A549 (cell line): ENCODE measurements at regions of chr19 and their contacts with region 1.

Region 1: GRCh38 chr19:56900573-56901097 is 60.1 kb upstream of the PEG3 start:
- DNase-seq: no peak
- ATAC-seq: no peak
- H3K4me3 ChIP-seq: no peak overlapping the region
- H3K27ac ChIP-seq: no peak overlapping the region
- H3K4me1 ChIP-seq: no peaks in the 10 kb centered on the region
- CTCF ChIP-seq: no peak
- EP300 ChIP-seq: no peak
- POLR2A ChIP-seq: no peak
- RAD21 ChIP-seq: no peak

Region 2: DNA sequence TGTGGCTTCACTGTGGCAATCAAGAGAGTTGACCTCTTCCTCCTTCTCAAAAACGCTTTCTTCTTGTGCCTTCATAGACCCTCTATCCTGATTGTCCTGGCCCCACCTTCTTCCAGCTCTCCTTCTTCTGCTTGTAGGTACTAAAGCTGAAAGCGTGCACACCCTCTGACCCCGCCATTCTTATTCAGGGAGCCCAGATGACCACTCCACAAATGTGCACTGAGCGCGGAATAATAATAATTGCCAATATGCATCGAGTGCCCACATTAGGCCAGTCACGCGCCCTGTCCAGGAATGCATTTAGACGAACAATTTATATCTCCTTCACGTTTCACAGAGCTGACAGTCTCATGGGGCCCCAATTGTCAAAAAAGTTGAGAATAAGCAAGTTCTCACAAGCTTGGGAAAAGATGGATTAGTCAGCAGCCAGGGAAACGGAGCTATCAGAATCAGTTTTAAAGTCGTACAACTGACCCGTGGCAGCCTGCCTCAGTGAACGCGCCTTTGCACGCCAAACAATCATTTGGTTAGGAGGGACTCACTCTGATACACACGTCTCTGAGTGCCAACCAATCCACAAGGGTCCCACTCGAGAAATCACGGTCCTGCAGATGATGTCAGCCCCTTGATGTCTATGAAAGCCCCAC is 23.4 kb before region 1 on chr19:
- CTCF ChIA-PET with region 1: no interaction called
- POLR2A ChIA-PET with region 1: no interaction called
- DNase-seq: no peak
- ATAC-seq: no peak
- H3K4me3 ChIP-seq: no peak overlapping the region
- H3K27ac ChIP-seq: no peak overlapping the region
- H3K4me1 ChIP-seq: no peaks in the 10 kb centered on the region
- CTCF ChIP-seq: no peak
- EP300 ChIP-seq: no peak
- POLR2A ChIP-seq: no peak
- RAD21 ChIP-seq: no peak

Region 3: DNA sequence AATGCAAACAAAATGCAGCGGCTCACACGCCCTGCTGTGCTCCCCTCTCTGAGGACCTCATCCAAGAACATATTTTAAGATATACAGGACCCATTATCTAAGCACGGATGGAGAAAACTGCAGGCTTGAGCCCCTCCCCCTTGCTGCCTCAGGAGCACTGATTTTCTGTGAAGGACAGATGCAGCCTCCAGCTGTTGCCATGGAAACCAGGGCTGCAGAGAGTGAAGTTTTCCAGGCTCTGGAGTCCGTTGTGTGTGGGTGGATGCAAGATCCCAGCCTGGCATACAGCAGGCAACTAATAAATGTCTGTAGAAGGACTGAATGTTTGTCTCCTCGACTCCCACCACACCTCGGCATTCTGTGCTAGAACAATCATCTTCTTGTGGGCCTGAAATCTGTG is 45.5 kb after region 1 on chr19:
- CTCF ChIA-PET with region 1: no interaction called
- POLR2A ChIA-PET with region 1: interaction called, 10 read pairs
- DNase-seq: no peak
- ATAC-seq: no peak
- H3K4me3 ChIP-seq: no peak overlapping the region
- H3K27ac ChIP-seq: no peak overlapping the region
- H3K4me1 ChIP-seq: no peaks in the 10 kb centered on the region
- CTCF ChIP-seq: no peak
- EP300 ChIP-seq: no peak
- POLR2A ChIP-seq: no peak
- RAD21 ChIP-seq: no peak